Gastrocnemius medialis (tissue), 4 donors: ENCODE measurements at regions of chr5 and their contacts with region 1.

Region 1: DNA sequence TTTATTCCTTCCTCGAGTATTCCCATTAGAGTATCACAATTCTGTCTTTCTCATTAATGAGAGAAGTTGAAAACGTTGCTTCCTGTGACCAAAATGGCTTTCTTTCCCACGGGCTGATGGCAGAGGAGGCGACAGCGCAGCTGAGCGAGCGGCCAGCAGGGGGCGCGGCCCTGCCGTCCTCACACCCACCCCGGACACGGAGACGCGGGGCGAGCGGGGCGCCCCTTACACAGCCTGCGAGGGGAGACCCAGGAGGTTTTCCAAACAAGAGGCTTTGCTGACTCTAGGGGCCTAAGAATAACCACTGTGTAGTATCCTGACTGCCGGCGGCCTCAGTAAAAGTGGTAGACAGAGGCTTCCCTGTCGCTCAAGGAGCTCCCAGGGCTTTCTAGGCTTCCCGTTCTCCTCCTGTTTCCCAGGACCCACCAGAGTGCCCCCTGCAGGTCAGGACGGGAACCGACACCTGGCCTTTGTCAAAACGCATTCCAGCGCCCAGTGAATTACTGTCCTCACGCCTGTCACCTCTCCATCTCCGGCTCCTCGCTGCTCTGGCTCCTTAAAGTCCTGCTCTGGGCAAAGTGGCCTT is 27.3 kb upstream of the FGF1 start:
- DNase-seq: peak; percentile 68 to 83
- ATAC-seq: peak; percentile 95 to 97
- H3K4me3 ChIP-seq: peak overlapping the region; percentile 59 to 65 (median 62)
- H3K27ac ChIP-seq: peak overlapping the region; percentile 71 to 83 (median 80)
- H3K4me1 ChIP-seq: peaks cover 0 to 3% of the 10 kb centered on the region in 2 donors
- H3K27me3 ChIP-seq: no peaks in the 10 kb centered on the region
- CTCF ChIP-seq: peak; percentile 93 to 97 (median 96)
- POLR2A ChIP-seq: no peak

Region 2: DNA sequence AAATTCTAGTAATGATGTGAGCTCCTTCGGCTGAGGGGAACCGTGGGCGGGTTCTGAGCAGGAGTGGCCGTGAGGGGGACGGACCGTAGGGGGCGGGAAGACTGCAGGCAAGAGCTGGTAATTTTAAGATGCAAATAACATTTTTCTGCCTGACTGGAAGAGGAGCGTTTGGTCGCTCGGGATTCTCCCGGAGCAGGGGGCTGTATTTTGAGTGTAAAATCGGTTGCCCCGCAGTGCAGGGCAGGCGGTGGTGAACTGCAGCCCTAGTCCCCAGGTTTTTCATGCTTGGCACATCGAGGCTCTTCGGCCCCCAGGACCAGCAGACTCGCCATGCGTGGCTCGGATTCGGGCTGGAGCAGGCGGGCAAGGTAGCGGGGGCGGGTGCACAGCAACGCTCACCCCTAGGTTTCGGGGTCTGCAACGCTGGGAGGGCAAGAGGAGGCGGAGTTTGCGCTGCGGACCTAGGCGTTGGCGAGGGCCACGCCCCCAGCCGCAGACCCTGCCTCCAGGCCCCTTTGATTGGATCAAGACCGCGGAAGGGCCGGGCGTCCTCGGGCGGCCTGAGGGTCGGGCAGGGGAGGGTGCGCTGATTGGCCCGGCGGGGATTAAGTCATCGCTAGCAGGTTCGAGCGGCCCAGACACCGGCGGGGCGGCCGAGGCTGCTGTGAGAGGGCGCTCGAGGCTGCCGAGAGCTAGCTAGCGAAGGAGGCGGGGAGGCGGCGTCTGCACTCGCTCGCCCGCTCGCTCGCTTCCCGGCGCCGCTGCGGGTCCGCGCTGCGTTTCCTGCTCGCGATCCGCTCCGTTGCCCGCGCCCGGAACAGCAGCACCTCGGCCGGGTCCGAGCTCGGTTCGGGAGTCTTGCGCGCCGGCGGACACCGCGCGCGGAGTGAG is 56.8 kb after region 1 on chr5 and contains the start of gene ARHGAP26:
- in situ Hi-C with region 1: no loop called
- intact Hi-C with region 1: loop called (anchors 2 kb)
- DNase-seq: peak; percentile 96 to 97
- ATAC-seq: peak; percentile 91 to 92
- H3K4me3 ChIP-seq: peak within 1 kb of the TSS; percentile 78 to 91 (median 88)
- H3K27ac ChIP-seq: peak within 1 kb of the TSS; percentile 71 to 85 (median 76)
- H3K4me1 ChIP-seq: peaks cover 30 to 31% of the 10 kb centered on the region in 2 donors
- H3K27me3 ChIP-seq: no peaks in the 10 kb centered on the region
- CTCF ChIP-seq: peak in 3 of 5 experiments; percentile 12 to 27 (median 17)
- POLR2A ChIP-seq: peak; percentile 99 to 100
- total RNA-seq, gene ARHGAP26: 9.1 to 22.4 (median 13.4) TPM